ENCODE measurements at regions of chr16 and their contacts with region 1.

Region 1: DNA sequence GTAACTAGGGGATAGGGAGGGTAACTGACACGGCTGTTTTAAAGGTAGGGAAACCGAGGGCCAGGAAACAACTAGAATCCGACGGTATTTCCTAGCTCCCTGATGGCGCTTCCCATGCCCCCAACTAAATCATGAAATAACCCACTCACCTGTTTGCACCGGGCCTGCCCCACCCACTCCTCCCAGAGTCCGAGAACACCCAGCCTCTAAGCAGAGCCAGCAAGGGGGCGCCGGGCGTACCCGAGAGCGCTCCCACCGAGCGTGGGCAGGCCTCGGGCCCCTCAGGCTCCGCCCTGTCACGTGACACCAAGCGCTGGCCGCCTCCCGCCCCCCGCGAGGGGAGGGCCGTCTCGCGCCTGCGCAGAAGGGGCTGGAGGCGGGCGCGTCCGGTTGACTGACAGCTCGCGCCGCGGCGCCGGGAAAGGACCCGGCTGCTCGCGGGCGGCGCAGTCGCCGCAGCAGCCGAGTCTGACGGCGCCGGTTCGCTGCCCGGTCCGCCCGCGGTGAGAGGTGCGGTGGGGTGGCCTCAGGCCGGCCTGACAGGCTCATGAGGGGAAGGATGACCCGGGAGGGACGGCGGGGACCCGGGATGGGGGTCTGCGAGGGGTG is at the start of gene KIAA0513:
- DNase-seq: peak; percentile 99

Region 2: GRCh38 chr16:85010931-85011845 is 16.3 kb before region 1 on chr16 and contains the start of gene ZDHHC7:
- CTCF ChIA-PET with region 1: interaction called, 4 read pairs
- POLR2A ChIA-PET with region 1: interaction called, 46 read pairs
- DNase-seq: peak; percentile 93

Region 3: GRCh38 chr16:85046931-85047866 is 19.7 kb after region 1 on chr16:
- CTCF ChIA-PET with region 1: interaction called, 3 read pairs
- POLR2A ChIA-PET with region 1: interaction called, 10 read pairs
- DNase-seq: no peak

Measured in HEK293T (cell line).